ENCODE measurements at regions of chr15 and their contacts with region 1.

Region 1: GRCh38 chr15:64153480-64154367 is 2.2 kb downstream of the SNX22 start:
- DNase-seq: peak; percentile 81 to 99
- H3K4me3 ChIP-seq: peak overlapping the region in 1 of 4 experiments; percentile 93; a peak in 3 of 8 replicates
- H3K27ac ChIP-seq: no peak overlapping the region
- H3K4me1 ChIP-seq: peaks cover 0 to 12% (median 8%) of the 10 kb centered on the region in 4 experiments; a peak in 6 of 7 replicates
- H3K27me3 ChIP-seq: peaks cover 0 to 18% (median 14%) of the 10 kb centered on the region in 4 experiments; a peak in 5 of 7 replicates
- CTCF ChIP-seq: peak; percentile 88 to 99 (median 99)
- EP300 ChIP-seq: no peak
- POLR2A ChIP-seq: peak; percentile 33 to 78
- RAD21 ChIP-seq: peak; percentile 76 to 88

Region 2: DNA sequence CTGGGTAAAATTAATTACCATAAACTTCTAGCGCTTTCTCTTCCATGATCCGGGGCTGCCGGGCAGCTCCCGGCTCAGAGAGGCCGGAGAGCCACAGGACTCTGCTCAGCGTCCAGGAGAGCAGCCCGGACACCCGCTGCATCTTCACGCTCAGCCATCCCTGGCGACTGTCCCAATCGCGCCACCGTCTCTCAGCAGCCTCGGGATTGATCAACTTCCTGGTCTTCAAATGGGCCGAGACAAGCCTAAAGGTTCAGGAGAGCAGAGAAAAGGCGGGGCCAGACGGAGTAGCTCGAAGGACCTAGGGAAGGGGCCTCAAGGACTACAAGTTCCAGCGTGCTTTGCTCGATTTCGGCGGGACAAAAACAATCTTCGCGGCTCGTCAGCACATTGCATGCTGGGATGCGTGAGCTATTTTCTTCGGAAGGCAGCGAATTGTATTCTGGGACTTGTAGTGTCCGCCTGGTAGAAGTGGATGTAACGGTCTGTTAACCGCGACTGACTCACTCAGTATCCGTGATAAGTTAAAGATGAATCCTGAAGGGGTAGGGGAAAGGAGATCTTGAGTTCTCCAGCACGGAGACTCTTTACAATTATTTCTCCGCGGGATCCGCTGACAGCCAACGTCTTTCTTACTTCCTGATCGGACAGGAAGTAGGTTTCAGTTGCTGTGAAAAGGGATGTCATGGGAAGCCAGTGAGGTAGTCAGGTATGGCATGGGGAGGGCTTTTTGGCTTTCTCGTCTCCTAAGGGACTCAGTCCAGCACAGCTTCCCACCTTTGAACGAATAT is 59.9 kb before region 1 on chr15 and contains the start of gene CIAO2A:
- CTCF ChIA-PET with region 1: interaction called, 6 read pairs
- POLR2A ChIA-PET with region 1: interaction called, 10 read pairs
- DNase-seq: peak; percentile 88 to 95
- H3K4me3 ChIP-seq: peak within 1 kb of the TSS; percentile 78 to 92 (median 83)
- H3K27ac ChIP-seq: peak within 1 kb of the TSS; percentile 66
- H3K4me1 ChIP-seq: peaks cover 2 to 6% (median 4%) of the 10 kb centered on the region in 4 experiments
- H3K27me3 ChIP-seq: no peaks in the 10 kb centered on the region
- CTCF ChIP-seq: no peak
- EP300 ChIP-seq: no peak
- POLR2A ChIP-seq: peak; percentile 48 to 74; a peak in 2 of 3 replicates
- RAD21 ChIP-seq: no peak
- total RNA-seq, gene CIAO2A: 86.5 and 89.3 TPM in 2 replicates

Region 3: DNA sequence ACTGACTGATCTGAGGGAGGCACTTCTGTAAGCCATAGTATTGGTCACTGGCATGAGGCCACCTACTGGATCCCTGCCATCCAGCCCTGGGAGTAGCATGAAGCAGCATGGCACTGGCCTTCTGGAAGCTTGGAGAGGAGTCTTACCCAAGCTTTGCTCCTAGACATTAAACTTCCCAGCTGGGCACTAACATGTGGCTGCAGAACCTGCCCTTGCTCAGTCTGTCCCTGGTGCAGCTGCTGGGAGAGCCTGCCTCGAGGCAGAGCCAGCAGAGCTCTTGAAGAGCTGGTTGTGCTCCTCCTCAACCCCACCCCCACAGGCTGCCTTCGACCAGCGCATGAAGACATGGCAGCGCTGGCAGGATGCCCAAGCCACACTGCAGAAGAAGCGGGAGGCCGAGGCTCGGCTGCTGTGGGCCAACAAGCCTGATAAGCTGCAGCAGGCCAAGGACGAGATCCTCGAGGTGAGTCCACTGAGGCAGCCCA is 19.3 kb before region 1 on chr15:
- CTCF ChIA-PET with region 1: interaction called, 18 read pairs
- POLR2A ChIA-PET with region 1: interaction called, 4 read pairs
- DNase-seq: no peak
- H3K4me3 ChIP-seq: no peak overlapping the region
- H3K27ac ChIP-seq: no peak overlapping the region
- H3K4me1 ChIP-seq: peaks cover 0 to 6% (median 2%) of the 10 kb centered on the region in 4 experiments; a peak in 1 of 7 replicates
- H3K27me3 ChIP-seq: no peaks in the 10 kb centered on the region
- CTCF ChIP-seq: no peak
- EP300 ChIP-seq: no peak
- POLR2A ChIP-seq: no peak
- RAD21 ChIP-seq: no peak

Region 4: GRCh38 chr15:64474846-64475245 is 321.1 kb after region 1 on chr15:
- CTCF ChIA-PET with region 1: no interaction called
- POLR2A ChIA-PET with region 1: no interaction called
- DNase-seq: no peak
- H3K4me3 ChIP-seq: no peak overlapping the region
- H3K27ac ChIP-seq: no peak overlapping the region
- H3K4me1 ChIP-seq: no peaks in the 10 kb centered on the region; a peak in 2 of 7 replicates
- H3K27me3 ChIP-seq: no peaks in the 10 kb centered on the region
- CTCF ChIP-seq: no peak
- EP300 ChIP-seq: no peak
- POLR2A ChIP-seq: no peak
- RAD21 ChIP-seq: no peak

Region 5: GRCh38 chr15:64536244-64536836 is 382.6 kb after region 1 on chr15:
- CTCF ChIA-PET with region 1: no interaction called
- POLR2A ChIA-PET with region 1: no interaction called
- DNase-seq: no peak
- H3K4me3 ChIP-seq: no peak overlapping the region
- H3K27ac ChIP-seq: no peak overlapping the region
- H3K4me1 ChIP-seq: no peaks in the 10 kb centered on the region
- H3K27me3 ChIP-seq: no peaks in the 10 kb centered on the region
- CTCF ChIP-seq: no peak
- EP300 ChIP-seq: no peak
- POLR2A ChIP-seq: no peak
- RAD21 ChIP-seq: no peak

Measured in H1 (cell line).